ENCODE measurements at regions of chr10 and their contacts with region 1.

Region 1: DNA sequence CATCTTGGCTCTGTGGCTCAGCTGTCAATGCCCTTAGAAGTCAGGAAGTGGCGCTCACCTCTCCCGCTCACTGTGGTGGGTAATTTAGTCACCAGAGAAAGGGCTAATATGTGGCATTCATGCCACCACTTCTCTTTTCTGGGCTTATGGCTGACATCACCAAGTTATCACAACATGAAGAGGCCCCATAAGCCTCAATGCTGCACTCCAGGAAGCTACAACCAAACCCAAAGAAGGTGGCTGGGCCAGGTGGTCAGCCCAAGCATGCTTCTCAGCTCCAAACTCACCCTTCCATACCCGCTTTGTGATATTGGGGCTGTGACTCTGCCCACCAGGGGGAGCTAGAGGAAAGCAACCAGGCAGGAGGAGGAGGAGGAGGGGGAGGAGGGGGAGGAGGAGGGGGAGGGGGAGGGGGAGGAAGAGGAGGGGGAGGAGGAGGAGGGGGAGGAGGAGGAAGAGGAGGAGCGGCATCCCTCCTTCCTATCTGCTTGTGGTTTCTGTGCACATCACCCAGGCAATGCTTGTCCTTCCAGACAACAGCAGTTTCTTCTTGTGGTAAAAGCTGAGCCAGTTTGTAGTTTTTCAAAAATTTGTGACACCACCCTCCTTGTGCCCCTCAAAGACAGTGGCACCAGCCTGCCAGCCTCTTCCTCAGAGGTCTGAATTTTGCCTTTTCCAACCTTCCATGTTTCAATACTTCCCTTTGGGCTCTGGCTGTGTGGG is 42.1 kb downstream of the CYP26A1 start:
- DNase-seq: peak; percentile 63 to 75
- ATAC-seq: no peak
- H3K4me3 ChIP-seq: no peak overlapping the region
- H3K27ac ChIP-seq: no peak overlapping the region
- H3K4me1 ChIP-seq: no peaks in the 10 kb centered on the region
- H3K27me3 ChIP-seq: peaks cover 0 to 9% (median 1%) of the 10 kb centered on the region in 3 donors
- CTCF ChIP-seq: peak; percentile 15

Region 2: DNA sequence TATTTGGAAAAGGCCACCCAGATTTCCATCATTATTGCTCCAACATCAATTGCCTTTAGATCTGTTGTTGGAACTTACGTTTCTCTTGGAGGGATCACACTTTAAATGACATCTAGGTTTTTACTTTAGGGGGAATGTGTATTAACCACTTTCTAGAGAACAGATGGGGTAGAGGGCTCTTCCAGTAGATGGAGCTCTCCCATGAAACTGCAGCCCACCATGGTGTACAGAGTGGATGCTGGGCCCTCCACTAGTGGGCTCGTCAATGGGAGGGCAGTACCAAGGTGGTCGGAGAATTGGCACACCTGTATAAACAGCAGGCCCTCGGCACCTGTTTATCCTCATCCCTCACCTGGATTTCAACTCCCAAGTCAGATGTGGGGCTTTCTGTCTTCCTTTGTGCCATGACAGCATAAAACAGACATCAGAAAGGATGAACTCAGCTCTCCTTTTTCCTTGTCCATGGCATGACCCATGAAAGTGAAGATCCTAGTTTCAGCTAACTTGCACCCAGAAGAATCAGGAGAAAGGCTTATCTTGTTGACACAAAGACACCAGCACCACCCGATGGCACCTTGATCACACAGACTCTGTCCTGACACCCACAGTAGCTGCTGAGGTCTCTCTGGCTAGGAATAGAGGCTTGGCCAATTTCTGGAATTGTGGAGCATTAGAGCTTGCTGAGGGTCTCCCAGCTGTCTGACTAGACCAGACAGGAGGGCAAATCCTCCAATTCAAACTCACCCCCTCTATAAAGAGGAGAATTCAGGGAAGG is 108.4 kb after region 1 on chr10:
- intact Hi-C with region 1: no loop called
- DNase-seq: no peak
- ATAC-seq: no peak
- H3K4me3 ChIP-seq: no peak overlapping the region
- H3K27ac ChIP-seq: no peak overlapping the region
- H3K4me1 ChIP-seq: no peaks in the 10 kb centered on the region
- H3K27me3 ChIP-seq: peaks cover 0 to 2% (median 0%) of the 10 kb centered on the region in 3 donors
- CTCF ChIP-seq: no peak

Region 3: GRCh38 chr10:93288654-93289634 is 173.1 kb after region 1 on chr10:
- intact Hi-C with region 1: loop called in 1 of 2 experiments (anchors 2 kb)
- DNase-seq: peak; percentile 51 to 64
- ATAC-seq: peak in 2 of 4 donors; percentile 62
- H3K4me3 ChIP-seq: no peak overlapping the region
- H3K27ac ChIP-seq: no peak overlapping the region
- H3K4me1 ChIP-seq: no peaks in the 10 kb centered on the region
- H3K27me3 ChIP-seq: no peaks in the 10 kb centered on the region
- CTCF ChIP-seq: peak; percentile 65

Region 4: GRCh38 chr10:93515071-93516005 is 399.5 kb after region 1 on chr10:
- intact Hi-C with region 1: no loop called
- DNase-seq: no peak
- ATAC-seq: peak in 1 of 4 donors; percentile 23
- H3K4me3 ChIP-seq: no peak overlapping the region
- H3K27ac ChIP-seq: peak overlapping the region; percentile 74
- H3K4me1 ChIP-seq: no peaks in the 10 kb centered on the region
- H3K27me3 ChIP-seq: no peaks in the 10 kb centered on the region
- CTCF ChIP-seq: no peak

Measured in psoas muscle (tissue), 8 donors.